Activated CD4-positive, alpha-beta T cell treated with anti-CD3 and anti-CD28 coated beads for 36 hours (primary cell): ENCODE measurements at regions of chr6 and their contacts with region 1.

Region 1: DNA sequence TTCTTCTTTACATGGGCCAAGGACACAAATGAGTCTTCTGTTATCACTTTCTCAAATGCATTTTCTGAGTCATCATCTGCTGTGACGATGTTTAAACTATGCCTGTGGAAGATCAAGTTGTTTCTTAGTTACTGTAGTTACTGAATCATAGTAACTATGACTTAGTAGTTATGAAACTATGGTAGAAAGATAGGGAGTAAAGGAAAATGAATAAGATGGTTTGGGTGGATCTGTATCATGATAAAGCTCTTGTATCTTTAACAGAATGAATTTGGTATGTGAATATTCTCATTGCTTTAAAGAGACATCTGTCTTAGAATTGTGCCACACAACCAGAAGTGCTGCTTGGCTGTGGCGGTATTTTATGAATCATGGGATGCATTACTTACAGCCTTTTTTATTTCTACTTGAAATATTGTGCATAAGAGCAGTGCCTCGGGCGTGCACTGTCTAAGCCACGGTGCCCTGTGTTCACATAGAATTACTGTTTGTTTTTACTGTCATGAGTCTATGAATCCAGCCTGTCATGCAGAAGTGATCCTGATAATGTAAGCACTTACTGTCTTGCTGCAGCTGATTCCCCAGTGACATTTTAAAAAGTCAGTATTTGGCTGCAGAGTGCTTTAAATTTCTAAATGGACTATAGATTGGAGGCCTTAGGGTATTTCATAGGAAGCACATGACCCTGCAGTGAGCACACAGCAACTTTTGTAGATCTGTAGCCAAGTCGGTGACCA is 215.2 kb downstream of the TMEM242 start:
- DNase-seq: peak; percentile 42
- ATAC-seq: peak; percentile 87
- H3K4me3 Mint-ChIP-seq: no peak overlapping the region
- H3K27ac Mint-ChIP-seq: peak overlapping the region; percentile 38
- H3K4me1 Mint-ChIP-seq: peaks cover 53% of the 10 kb centered on the region
- H3K27me3 Mint-ChIP-seq: no peaks in the 10 kb centered on the region

Region 2: DNA sequence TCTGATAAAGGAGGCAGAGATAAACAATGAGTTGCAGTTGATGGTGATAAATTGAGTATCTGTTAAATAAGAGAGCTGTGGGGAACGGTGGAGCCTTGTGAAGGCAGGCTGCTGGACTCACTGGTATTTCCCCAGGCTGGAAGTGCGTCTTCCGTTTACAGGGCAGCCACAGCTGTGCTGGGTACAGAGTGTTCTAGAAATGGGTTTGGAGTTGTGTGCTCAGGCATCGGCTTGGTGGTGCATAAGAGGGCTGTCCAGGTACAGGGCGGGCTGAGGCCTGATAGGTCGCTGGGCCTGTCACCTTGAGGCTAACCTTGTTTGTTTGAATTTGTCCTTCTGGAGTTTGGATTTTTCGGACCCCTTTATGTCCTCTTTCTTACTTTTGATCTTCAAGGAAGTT is 291.6 kb before region 1 on chr6:
- CTCF ChIA-PET with region 1: no interaction called
- POLR2A ChIA-PET with region 1: no interaction called
- intact Hi-C with region 1: no loop called
- DNase-seq: no peak
- ATAC-seq: no peak
- H3K4me3 Mint-ChIP-seq: no peak overlapping the region
- H3K27ac Mint-ChIP-seq: no peak overlapping the region
- H3K4me1 Mint-ChIP-seq: peaks cover 70% of the 10 kb centered on the region
- H3K27me3 Mint-ChIP-seq: no peaks in the 10 kb centered on the region

Region 3: DNA sequence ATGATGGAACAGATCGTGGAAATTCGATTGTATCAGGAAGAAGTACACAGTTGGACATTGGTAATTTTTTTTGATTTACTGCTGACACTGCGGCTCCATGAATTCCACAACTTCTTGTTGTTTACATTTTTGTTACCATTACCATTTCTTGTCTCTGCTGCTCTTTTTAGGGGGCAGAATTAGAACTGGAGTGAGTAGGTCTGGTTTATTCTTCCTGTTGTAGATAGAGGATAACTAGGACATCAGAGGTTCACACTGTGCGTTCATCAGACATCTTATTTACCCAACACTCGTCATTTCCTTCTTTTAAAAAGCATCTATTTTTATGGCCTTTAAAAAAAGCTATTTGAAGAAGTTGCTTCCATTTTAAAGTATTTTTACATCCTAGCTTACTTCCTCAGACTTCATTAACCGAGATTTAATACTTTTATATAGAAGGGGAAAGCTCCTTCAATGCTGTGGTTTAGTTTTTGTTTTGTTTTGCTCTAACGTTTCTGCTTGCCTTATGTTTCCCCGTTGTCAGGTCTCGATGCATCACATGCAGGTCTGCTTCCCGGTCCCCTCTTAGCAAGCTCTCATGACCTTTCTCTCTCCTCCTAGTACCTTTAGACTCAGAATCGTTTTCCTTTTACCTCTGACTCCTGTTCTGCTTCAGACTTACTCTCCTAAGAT is 191.8 kb before region 1 on chr6:
- CTCF ChIA-PET with region 1: no interaction called
- POLR2A ChIA-PET with region 1: no interaction called
- intact Hi-C with region 1: no loop called
- DNase-seq: no peak
- ATAC-seq: peak; percentile 36
- H3K4me3 Mint-ChIP-seq: no peak overlapping the region
- H3K27ac Mint-ChIP-seq: peak overlapping the region; percentile 1
- H3K4me1 Mint-ChIP-seq: peaks cover 64% of the 10 kb centered on the region
- H3K27me3 Mint-ChIP-seq: no peaks in the 10 kb centered on the region

Region 4: DNA sequence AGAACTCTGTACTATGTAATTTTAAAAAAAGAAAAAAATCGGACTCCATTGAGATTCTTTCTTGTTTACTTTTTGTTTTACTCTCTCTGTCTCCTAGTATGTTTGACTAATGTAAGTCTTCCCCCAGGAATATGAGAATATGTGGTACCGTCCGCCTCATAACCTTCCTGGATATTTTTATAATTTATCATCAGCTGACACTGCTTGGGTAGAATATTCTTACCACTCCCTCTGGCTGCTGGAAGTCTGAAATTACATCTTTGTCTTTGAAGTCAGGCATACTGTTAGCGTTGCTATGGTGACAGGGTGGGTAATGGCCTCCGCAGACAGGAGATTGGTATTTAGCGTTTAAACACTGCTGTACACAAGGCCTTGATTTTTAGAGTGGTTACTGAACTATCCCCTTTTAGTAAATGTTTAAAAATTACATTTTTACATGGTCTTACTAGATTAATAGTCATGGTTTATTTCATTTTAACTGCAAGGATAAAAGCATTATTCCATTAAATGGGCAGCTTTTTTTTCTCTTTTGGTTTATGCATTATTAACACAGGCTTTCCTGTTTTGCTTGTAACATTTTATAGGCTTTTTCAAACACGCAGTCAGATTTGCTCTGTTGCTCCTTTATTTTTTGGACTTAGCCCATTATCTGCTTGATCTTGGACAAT is 154.5 kb before region 1 on chr6:
- CTCF ChIA-PET with region 1: no interaction called
- POLR2A ChIA-PET with region 1: no interaction called
- intact Hi-C with region 1: loop called in 1 of 2 experiments (anchors 5 kb)
- DNase-seq: peak; percentile 48
- ATAC-seq: peak; percentile 44
- H3K4me3 Mint-ChIP-seq: no peak overlapping the region
- H3K27ac Mint-ChIP-seq: peak overlapping the region; percentile 43
- H3K4me1 Mint-ChIP-seq: peaks cover 66% of the 10 kb centered on the region
- H3K27me3 Mint-ChIP-seq: no peaks in the 10 kb centered on the region

Region 5: GRCh38 chr6:157075549-157076450 is 32.3 kb before region 1 on chr6:
- CTCF ChIA-PET with region 1: interaction called, 4 read pairs
- POLR2A ChIA-PET with region 1: no interaction called
- intact Hi-C with region 1: loop called in 1 of 2 experiments (anchors 2 kb)
- DNase-seq: peak; percentile 48
- ATAC-seq: peak; percentile 87
- H3K4me3 Mint-ChIP-seq: peak overlapping the region; percentile 54
- H3K27ac Mint-ChIP-seq: peak overlapping the region; percentile 89
- H3K4me1 Mint-ChIP-seq: peaks cover 53% of the 10 kb centered on the region
- H3K27me3 Mint-ChIP-seq: no peaks in the 10 kb centered on the region

Region 6: DNA sequence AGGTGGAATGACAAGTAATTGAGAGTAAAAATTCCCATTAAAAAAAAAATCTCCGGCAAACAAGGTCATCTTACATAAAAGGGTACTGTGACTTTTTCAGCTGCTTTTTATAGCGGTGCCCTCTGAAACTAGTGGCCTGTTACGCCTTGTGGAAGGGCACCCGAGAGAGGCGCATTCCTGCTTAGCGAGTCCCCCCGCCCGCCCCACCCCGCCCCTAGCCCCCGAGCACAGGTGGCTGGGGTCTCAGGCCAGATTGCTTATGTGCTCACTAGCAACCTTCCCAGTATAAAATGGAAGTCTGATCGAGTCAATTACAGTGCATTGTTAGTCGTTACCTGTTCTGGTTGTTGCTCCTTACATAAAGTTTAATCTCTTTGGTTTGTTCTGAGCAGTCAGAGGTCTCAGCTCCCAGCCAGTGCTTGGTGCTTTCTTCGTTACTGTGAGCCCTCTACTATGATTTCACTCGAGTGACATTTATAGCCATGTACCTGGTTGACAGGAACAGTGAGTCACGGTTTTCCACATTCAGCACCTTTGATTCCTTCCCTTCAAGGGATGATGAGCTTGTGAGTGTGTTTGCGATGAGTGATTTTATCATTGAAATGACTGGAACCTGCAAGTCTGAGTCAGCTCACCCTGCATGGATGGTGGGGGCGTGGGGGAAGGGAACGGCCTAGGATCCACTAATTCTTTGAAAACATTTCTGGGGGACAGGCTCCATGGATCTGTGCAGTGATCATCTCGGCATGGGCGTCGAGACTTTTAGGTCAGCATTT is 320.5 kb after region 1 on chr6:
- CTCF ChIA-PET with region 1: no interaction called
- POLR2A ChIA-PET with region 1: no interaction called
- intact Hi-C with region 1: loop called in 1 of 2 experiments (anchors 2 kb)
- DNase-seq: peak; percentile 88
- ATAC-seq: peak; percentile 89
- H3K4me3 Mint-ChIP-seq: peak overlapping the region; percentile 51
- H3K27ac Mint-ChIP-seq: peak overlapping the region; percentile 91
- H3K4me1 Mint-ChIP-seq: peaks cover 46% of the 10 kb centered on the region
- H3K27me3 Mint-ChIP-seq: no peaks in the 10 kb centered on the region